ENCODE measurements at regions of chr1 and their contacts with region 1.

Region 1: GRCh38 chr1:225911191-225912130 is 12.6 kb downstream of the PYCR2 start:
- DNase-seq: peak; percentile 54 to 79 (median 70)
- H3K4me3 ChIP-seq: no peak overlapping the region
- H3K4me3 Mint-ChIP-seq: peak overlapping the region in 2 of 8 donors; percentile 14 to 21
- H3K27ac ChIP-seq: no peak overlapping the region
- H3K27ac Mint-ChIP-seq: peak overlapping the region in 2 of 7 donors; percentile 51 to 64
- H3K4me1 ChIP-seq: peaks cover 25% of the 10 kb centered on the region
- H3K4me1 Mint-ChIP-seq: peaks cover 18 to 33% (median 25%) of the 10 kb centered on the region in 4 donors
- H3K27me3 ChIP-seq: no peaks in the 10 kb centered on the region
- H3K27me3 Mint-ChIP-seq: no peaks in the 10 kb centered on the region

Region 2: GRCh38 chr1:225554216-225554812 is 357.1 kb before region 1 on chr1:
- CTCF ChIA-PET with region 1: interaction called, 3 read pairs
- POLR2A ChIA-PET with region 1: no interaction called
- intact Hi-C with region 1: loop called (anchors 1 kb)
- DNase-seq: peak in 4 of 5 donors; percentile 15 to 28 (median 22)
- H3K4me3 ChIP-seq: no peak overlapping the region
- H3K4me3 Mint-ChIP-seq: no peak overlapping the region
- H3K27ac ChIP-seq: no peak overlapping the region
- H3K27ac Mint-ChIP-seq: no peak overlapping the region
- H3K4me1 ChIP-seq: no peaks in the 10 kb centered on the region
- H3K4me1 Mint-ChIP-seq: no peaks in the 10 kb centered on the region
- H3K27me3 ChIP-seq: no peaks in the 10 kb centered on the region
- H3K27me3 Mint-ChIP-seq: peaks cover 4 to 8% of the 10 kb centered on the region in 2 donors

Region 3: GRCh38 chr1:225855503-225856300 is 55.8 kb before region 1 on chr1:
- CTCF ChIA-PET with region 1: interaction called, 17 read pairs
- POLR2A ChIA-PET with region 1: interaction called, 8 read pairs
- intact Hi-C with region 1: no loop called
- DNase-seq: no peak
- H3K4me3 ChIP-seq: no peak overlapping the region
- H3K4me3 Mint-ChIP-seq: peak overlapping the region in 1 of 8 donors; percentile 22
- H3K27ac ChIP-seq: no peak overlapping the region
- H3K27ac Mint-ChIP-seq: peak overlapping the region; percentile 9 to 74 (median 57)
- H3K4me1 ChIP-seq: peaks cover 10% of the 10 kb centered on the region
- H3K4me1 Mint-ChIP-seq: peaks cover 19 to 61% (median 32%) of the 10 kb centered on the region in 4 donors
- H3K27me3 ChIP-seq: no peaks in the 10 kb centered on the region
- H3K27me3 Mint-ChIP-seq: no peaks in the 10 kb centered on the region

Region 4: GRCh38 chr1:225875044-225875814 is 36.2 kb before region 1 on chr1:
- CTCF ChIA-PET with region 1: interaction called, 294 read pairs
- POLR2A ChIA-PET with region 1: interaction called, 730 read pairs
- intact Hi-C with region 1: no loop called
- DNase-seq: no peak
- H3K4me3 ChIP-seq: no peak overlapping the region
- H3K4me3 Mint-ChIP-seq: peak overlapping the region; percentile 4 to 63 (median 57)
- H3K27ac ChIP-seq: peak overlapping the region; percentile 26
- H3K27ac Mint-ChIP-seq: peak overlapping the region; percentile 79 to 97 (median 83)
- H3K4me1 ChIP-seq: peaks cover 77% of the 10 kb centered on the region
- H3K4me1 Mint-ChIP-seq: peaks cover 52 to 93% (median 73%) of the 10 kb centered on the region in 4 donors
- H3K27me3 ChIP-seq: no peaks in the 10 kb centered on the region
- H3K27me3 Mint-ChIP-seq: no peaks in the 10 kb centered on the region

Region 5: DNA sequence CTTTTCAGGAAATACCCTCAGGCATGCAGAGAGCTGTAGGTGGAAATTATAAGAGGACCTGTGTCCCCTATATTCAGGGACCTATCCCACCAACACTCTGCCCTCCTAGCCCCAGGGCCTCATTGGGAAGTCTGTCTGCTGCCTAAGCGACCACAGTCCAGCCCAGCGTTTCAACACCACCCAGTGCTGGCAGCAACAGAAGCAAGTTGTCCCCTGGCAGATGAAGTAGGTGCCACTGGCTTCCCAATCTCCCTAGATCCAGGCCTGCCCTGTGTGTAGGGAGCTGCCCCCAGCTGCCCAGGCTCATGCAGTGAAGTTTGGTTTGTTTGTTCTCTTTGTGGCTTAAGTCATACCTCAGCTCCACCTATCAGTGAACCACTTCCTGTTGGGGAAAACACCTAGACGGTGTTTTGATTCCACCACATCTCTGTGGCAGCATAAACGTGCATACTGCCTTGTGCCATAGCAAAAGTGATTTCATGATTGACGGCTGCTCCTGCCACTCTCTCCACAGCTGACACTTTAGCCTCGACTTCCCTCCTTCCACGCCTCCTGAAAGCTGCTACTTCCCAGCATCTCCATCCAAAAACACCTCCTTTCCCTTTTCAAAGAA is 14.4 kb before region 1 on chr1:
- CTCF ChIA-PET with region 1: interaction called, 43 read pairs
- POLR2A ChIA-PET with region 1: interaction called, 85 read pairs
- intact Hi-C with region 1: loop called (anchors 1 kb)
- DNase-seq: peak; percentile 87 to 92 (median 88)
- H3K4me3 ChIP-seq: peak overlapping the region in 1 of 2 donors; percentile 13
- H3K4me3 Mint-ChIP-seq: peak overlapping the region; percentile 72 to 92 (median 82)
- H3K27ac ChIP-seq: peak overlapping the region; percentile 72
- H3K27ac Mint-ChIP-seq: peak overlapping the region; percentile 94 to 99 (median 98)
- H3K4me1 ChIP-seq: peaks cover 45% of the 10 kb centered on the region
- H3K4me1 Mint-ChIP-seq: peaks cover 34 to 65% (median 46%) of the 10 kb centered on the region in 4 donors
- H3K27me3 ChIP-seq: no peaks in the 10 kb centered on the region
- H3K27me3 Mint-ChIP-seq: no peaks in the 10 kb centered on the region